ENCODE measurements at regions of chr11 and their contacts with region 1.

Region 1: DNA sequence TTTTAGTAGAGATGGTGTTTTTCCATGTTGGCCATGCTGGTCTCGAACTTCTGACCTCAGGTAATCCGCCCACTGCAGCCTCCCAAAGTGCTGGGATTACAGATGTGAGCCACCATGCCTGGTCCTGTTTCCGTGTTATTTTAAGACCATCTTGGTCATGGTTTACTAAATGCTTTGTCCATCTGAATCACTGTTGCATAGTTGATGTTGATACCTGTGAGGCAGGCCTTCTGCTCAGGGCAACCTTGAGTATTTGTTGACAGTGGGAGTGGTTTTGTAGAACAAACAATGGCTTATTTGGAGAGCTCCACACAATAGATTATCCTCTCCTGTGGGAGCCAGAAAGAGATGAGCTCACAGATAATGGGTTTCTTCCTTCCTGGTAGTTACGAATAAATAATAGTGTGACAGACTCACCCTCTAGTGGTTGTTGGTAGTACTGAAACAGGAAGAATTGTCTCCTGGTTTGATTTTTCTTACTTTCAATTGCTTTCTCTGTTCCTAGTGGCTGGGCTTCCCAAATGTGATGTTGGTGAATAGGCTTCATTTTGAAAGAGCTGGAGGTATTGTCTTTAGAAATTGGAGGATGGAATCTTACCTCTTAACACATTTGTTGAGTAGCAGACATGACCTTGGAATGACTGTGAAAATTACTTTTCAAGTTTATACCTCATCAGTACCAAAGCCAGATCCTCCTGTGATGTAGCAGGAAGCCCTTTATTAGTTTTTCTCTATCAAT is 39.0 kb downstream of the CTNND1 start:
- DNase-seq: peak; percentile 99
- ATAC-seq: peak; percentile 87
- H3K4me3 ChIP-seq: no peak overlapping the region; the same call in 1 of the 2 replicates
- H3K27ac ChIP-seq: peak overlapping the region; percentile 82
- H3K4me1 ChIP-seq: peaks cover 32% of the 10 kb centered on the region
- H3K27me3 ChIP-seq: no peaks in the 10 kb centered on the region
- CTCF ChIP-seq: peak; percentile 98

Region 2: DNA sequence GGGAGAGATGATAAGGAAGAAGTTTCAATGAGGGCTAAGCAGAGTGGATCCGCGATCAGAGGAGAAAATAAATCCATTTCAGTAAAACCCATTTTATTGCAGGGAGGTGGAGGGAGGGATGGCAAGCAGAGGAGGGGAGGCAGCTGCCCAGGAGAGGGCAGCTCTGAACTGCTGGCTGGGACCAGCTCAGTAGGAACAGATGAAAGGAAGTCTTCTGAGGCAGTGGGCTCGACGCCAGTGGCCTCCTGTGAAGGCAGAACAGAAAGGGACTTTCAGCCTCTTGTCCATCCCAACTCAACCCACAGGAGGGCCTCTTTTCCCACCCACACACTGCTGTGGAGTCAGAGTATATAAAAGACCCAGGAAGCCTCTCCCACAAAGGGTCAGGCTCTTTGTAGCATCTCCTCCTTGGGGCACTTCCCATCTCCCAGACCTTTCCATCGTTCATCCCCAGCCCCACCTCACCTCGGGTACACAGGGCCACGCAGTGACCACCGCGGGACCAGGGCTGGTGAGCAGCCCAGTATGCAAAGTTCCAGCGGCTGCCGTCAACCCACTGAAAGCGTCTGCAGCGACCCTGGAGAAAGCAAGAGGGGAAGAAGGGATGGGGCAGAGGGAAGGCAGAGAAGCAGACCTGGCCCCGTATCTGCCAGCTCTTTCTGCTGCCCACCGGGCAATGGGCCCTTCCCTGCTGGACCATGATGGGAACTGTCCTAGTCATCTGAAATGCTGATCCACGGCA is 413.2 kb before region 1 on chr11:
- CTCF ChIA-PET with region 1: no interaction called
- POLR2A ChIA-PET with region 1: no interaction called
- intact Hi-C with region 1: no loop called
- DNase-seq: peak; percentile 39
- ATAC-seq: peak; percentile 50
- H3K4me3 ChIP-seq: no peak overlapping the region
- H3K27ac ChIP-seq: no peak overlapping the region
- H3K4me1 ChIP-seq: no peaks in the 10 kb centered on the region
- H3K27me3 ChIP-seq: peaks cover 61% of the 10 kb centered on the region
- CTCF ChIP-seq: peak; percentile 44

Region 3: DNA sequence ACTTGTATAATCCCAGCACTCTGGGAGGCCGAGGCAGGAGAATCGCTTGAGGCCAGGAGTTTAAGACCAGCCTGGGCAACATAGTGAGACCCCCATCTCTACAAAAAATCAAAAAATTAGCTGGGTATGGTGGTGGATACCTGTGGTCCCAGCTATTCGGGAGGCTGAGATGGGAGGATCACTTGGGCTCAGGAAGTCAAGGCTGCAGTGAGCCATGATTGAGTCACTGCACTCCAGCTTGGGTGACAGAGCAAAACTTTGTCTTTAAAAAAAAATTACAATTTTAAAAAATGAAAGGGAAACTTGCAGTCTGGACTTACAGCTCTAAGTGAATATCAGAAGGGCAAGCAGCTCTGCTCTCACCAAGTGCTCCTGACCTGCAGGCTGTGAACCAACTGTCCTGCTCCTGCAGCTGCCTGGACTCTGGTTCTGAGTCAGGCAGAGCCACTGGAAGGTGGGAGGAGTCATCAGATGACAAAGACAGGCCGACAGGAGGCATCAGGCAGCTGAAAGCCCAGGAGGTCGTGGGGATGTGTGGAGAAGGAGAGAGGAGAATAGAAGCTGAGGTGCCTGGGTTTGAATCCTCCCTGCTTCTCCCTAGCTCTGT is 253.6 kb before region 1 on chr11:
- CTCF ChIA-PET with region 1: no interaction called
- POLR2A ChIA-PET with region 1: no interaction called
- intact Hi-C with region 1: no loop called
- DNase-seq: peak; percentile 62
- ATAC-seq: peak; percentile 91
- H3K4me3 ChIP-seq: no peak overlapping the region
- H3K27ac ChIP-seq: no peak overlapping the region
- H3K4me1 ChIP-seq: no peaks in the 10 kb centered on the region
- H3K27me3 ChIP-seq: no peaks in the 10 kb centered on the region
- CTCF ChIP-seq: peak; percentile 39; the same call in 1 of the 2 replicates

Region 4: GRCh38 chr11:57712256-57713150 is 88.1 kb before region 1 on chr11 and contains the start of gene TMX2:
- CTCF ChIA-PET with region 1: interaction called, 5 read pairs
- POLR2A ChIA-PET with region 1: no interaction called
- intact Hi-C with region 1: loop called (anchors 1 kb)
- DNase-seq: peak; percentile 99
- ATAC-seq: peak; percentile 92
- H3K4me3 ChIP-seq: peak within 1 kb of the TSS; percentile 99
- H3K27ac ChIP-seq: peak within 1 kb of the TSS; percentile 75
- H3K4me1 ChIP-seq: peaks cover 24% of the 10 kb centered on the region
- H3K27me3 ChIP-seq: no peaks in the 10 kb centered on the region
- CTCF ChIP-seq: no peak
- total RNA-seq, gene TMX2: 228 and 241 TPM in 2 replicates

Region 5: DNA sequence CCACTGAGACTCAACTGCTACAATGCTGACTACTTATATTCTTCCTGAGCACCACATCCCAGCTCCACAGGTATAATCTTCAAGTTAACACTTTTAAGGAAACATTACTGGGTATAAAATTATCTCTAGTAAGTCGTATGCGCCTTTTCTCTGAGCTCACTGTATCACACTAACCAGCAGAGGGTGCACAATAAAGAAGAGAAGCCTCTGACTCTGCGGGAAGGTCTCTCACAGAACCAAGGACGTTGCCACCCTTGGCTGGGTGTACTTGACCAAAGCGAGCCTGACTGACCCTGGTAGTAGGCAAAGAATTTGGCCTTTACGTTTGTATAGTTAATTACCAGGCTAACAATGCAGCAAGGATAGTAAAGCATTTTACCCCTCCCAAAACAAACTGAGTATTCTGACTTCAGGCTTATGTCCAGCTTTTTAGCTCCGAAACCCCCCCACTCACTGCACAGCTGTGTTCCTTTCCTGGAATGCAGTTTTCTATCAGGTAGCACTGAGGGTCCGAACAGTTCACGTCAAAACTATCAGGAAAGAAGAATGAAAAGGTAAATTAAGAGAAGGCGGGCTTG is 48.8 kb before region 1 on chr11 and contains the start of gene BTBD18:
- CTCF ChIA-PET with region 1: interaction called, 46 read pairs
- POLR2A ChIA-PET with region 1: interaction called, 5 read pairs
- intact Hi-C with region 1: loop called (anchors 1 kb)
- DNase-seq: peak; percentile 79
- ATAC-seq: peak; percentile 92
- H3K4me3 ChIP-seq: no peak within 1 kb of the TSS
- H3K27ac ChIP-seq: no peak within 1 kb of the TSS
- H3K4me1 ChIP-seq: 0 out of 2 replicates have a peak, but pooled peaks cover 3% of the 10 kb centered on the region
- H3K27me3 ChIP-seq: no peaks in the 10 kb centered on the region
- CTCF ChIP-seq: peak; percentile 87
- total RNA-seq, gene BTBD18: not detected in 2 replicates

Region 6: GRCh38 chr11:57778318-57779037 is 22.1 kb before region 1 on chr11:
- CTCF ChIA-PET with region 1: interaction called, 49 read pairs
- POLR2A ChIA-PET with region 1: interaction called, 16 read pairs
- intact Hi-C with region 1: loop called (anchors 1 kb)
- DNase-seq: peak; percentile 99
- ATAC-seq: peak; percentile 80
- H3K4me3 ChIP-seq: peak overlapping the region; percentile 60
- H3K27ac ChIP-seq: peak overlapping the region; percentile 96
- H3K4me1 ChIP-seq: peaks cover 89% of the 10 kb centered on the region
- H3K27me3 ChIP-seq: no peaks in the 10 kb centered on the region
- CTCF ChIP-seq: no peak

Region 7: DNA sequence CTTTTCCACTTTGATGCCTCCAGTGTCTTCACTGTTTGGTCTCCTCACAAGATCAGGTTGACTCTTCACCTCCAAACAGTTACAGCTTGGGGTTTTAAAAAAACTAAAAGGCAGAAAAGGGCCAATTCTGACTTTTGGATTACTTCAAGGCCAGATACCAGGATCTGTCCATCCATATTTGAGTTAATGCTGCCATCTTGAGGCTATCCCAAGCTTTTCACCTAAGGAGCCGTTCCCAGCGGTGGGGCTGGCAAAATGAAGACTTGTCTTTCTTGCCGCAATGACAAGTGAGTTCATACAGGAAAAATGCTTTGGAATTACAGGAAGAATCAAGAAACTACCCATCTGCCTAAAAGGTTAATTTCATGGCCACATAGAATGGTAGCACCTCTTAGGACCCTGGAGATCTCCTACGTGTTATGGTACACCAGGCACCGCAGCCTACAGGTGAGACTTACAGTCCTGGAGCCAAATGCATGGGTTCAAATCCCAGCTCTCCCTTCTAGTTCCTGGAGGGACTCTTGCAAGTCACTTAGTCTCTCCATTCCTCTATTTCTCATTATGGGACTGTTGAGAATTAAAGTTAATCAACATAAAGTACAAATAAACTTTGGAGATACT is 713.2 kb after region 1 on chr11:
- CTCF ChIA-PET with region 1: interaction called, 3 read pairs
- POLR2A ChIA-PET with region 1: no interaction called
- intact Hi-C with region 1: loop called (anchors 1 kb)
- DNase-seq: peak; percentile 92
- ATAC-seq: peak; percentile 98
- H3K4me3 ChIP-seq: no peak overlapping the region
- H3K27ac ChIP-seq: no peak overlapping the region
- H3K4me1 ChIP-seq: peaks cover 6% of the 10 kb centered on the region; the same call in 1 of the 2 replicates
- H3K27me3 ChIP-seq: no peaks in the 10 kb centered on the region
- CTCF ChIP-seq: peak; percentile 97